K562 (cell line): ENCODE measurements at regions of chr5 and their contacts with region 1.

Region 1: DNA sequence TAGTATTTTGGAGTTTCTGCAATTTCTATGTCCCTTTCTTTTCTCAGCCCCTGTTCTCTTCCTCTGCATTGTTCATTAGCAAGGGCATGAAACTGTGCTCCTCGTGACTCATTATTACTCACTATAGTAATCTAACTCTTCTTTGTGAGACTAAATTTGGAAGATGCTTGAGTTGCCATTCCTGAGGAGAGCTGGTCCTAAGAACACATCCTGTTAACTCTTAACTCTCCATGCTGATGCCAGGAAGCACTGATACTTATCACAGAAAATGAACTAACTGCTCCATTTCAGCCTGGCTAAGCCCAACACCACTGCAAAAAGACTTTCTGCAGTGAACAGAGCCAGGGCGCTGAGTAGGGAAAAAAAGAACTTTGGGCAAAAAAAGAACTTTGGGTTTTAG is 10.6 kb upstream of the CSNK1A1 start:
- DNase-seq: peak in 2 of 4 experiments; percentile 36 to 63
- ATAC-seq: peak; percentile 57
- H3K4me3 ChIP-seq: no peak overlapping the region
- H3K27ac ChIP-seq: peak overlapping the region; percentile 53; the same call in 1 of the 3 replicates
- H3K4me1 ChIP-seq: peaks cover 8 to 29% of the 10 kb centered on the region in 2 experiments; a peak in 4 of 5 replicates
- H3K27me3 ChIP-seq: no peaks in the 10 kb centered on the region
- CTCF ChIP-seq: no peak
- EP300 ChIP-seq: peak; percentile 61
- POLR2A ChIP-seq: no peak
- RAD21 ChIP-seq: peak in 1 of 2 experiments; percentile 18; a peak in 1 of 4 replicates

Region 2: GRCh38 chr5:149317281-149318048 is 244.4 kb before region 1 on chr5:
- CTCF ChIA-PET with region 1: no interaction called
- POLR2A ChIA-PET with region 1: interaction called, 3 read pairs
- in situ Hi-C with region 1: no loop called
- intact Hi-C with region 1: loop called (anchors 1 kb)
- DNase-seq: peak; percentile 61 to 73 (median 68)
- ATAC-seq: peak; percentile 46
- H3K4me3 ChIP-seq: no peak overlapping the region
- H3K27ac ChIP-seq: no peak overlapping the region; the same call in 2 of the 3 replicates
- H3K4me1 ChIP-seq: peaks cover 27 to 28% of the 10 kb centered on the region in 2 experiments
- H3K27me3 ChIP-seq: peaks cover 5% of the 10 kb centered on the region in 2 experiments
- CTCF ChIP-seq: peak; percentile 64 to 92 (median 79); a peak in 5 of 6 replicates
- EP300 ChIP-seq: no peak
- POLR2A ChIP-seq: no peak
- RAD21 ChIP-seq: peak; percentile 83 to 93

Region 3: GRCh38 chr5:149381987-149382340 is 179.9 kb before region 1 on chr5:
- CTCF ChIA-PET with region 1: interaction called, 6 read pairs
- POLR2A ChIA-PET with region 1: interaction called, 3 read pairs
- in situ Hi-C with region 1: no loop called
- intact Hi-C with region 1: loop called (anchors 1 kb)
- DNase-seq: peak; percentile 81 to 85 (median 84)
- ATAC-seq: peak; percentile 97
- H3K4me3 ChIP-seq: no peak overlapping the region
- H3K27ac ChIP-seq: no peak overlapping the region
- H3K4me1 ChIP-seq: peaks cover 3 to 25% of the 10 kb centered on the region in 2 experiments; a peak in 3 of 5 replicates
- H3K27me3 ChIP-seq: no peaks in the 10 kb centered on the region
- CTCF ChIP-seq: peak; percentile 91 to 95 (median 92)
- EP300 ChIP-seq: no peak
- POLR2A ChIP-seq: no peak
- RAD21 ChIP-seq: peak; percentile 88 to 95

Region 4: DNA sequence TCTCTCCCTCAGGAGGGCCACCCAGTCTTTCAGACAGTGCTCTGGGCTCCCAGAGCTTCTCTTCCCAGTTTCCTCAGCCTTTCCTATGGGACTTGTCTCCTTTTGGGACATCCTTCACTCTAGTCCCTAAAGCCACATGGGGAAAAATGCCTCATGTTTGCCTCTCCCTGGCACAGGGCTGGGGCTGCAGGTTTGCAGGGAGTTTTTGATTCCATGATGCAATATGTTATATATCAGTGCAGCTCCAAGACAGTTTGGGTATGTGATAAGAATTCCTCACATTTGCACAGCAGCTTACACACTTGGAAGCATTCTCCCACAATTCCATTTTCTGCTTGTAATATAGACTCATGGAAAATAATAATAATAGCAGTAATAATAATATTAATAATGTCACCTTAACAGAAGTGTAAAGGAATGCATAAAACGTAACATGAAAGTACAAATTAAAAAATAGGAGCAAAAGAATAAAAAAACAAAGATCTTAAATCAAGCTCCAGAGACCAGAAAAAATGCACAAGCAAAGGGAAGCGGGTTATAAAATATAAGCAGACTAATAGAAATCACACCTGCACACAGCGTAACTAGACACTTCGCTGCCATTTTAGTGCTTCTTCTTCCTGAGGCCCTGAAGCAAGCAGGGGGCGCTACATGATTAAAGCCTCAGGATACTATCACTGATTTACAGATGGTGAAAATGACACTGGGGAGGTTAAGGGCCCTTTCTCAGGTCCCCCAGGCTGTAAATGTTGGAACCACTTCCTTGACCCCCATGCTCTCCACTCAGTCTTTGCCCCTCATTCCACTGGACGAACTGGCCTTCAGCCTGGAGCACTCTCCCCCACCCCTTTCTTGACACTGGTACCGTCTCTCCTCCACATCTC is 112.8 kb before region 1 on chr5:
- CTCF ChIA-PET with region 1: interaction called, 14 read pairs
- POLR2A ChIA-PET with region 1: interaction called, 3 read pairs
- in situ Hi-C with region 1: no loop called
- intact Hi-C with region 1: loop called (anchors 2 kb)
- DNase-seq: peak; percentile 48 to 82 (median 62)
- ATAC-seq: peak; percentile 66
- H3K4me3 ChIP-seq: no peak overlapping the region
- H3K27ac ChIP-seq: no peak overlapping the region
- H3K4me1 ChIP-seq: peaks cover 48 to 62% of the 10 kb centered on the region in 2 experiments
- H3K27me3 ChIP-seq: no peaks in the 10 kb centered on the region
- CTCF ChIP-seq: peak; percentile 70 to 86 (median 78)
- EP300 ChIP-seq: no peak; the same call in 1 of the 2 replicates
- POLR2A ChIP-seq: no peak
- RAD21 ChIP-seq: peak; percentile 81 to 90

Region 5: DNA sequence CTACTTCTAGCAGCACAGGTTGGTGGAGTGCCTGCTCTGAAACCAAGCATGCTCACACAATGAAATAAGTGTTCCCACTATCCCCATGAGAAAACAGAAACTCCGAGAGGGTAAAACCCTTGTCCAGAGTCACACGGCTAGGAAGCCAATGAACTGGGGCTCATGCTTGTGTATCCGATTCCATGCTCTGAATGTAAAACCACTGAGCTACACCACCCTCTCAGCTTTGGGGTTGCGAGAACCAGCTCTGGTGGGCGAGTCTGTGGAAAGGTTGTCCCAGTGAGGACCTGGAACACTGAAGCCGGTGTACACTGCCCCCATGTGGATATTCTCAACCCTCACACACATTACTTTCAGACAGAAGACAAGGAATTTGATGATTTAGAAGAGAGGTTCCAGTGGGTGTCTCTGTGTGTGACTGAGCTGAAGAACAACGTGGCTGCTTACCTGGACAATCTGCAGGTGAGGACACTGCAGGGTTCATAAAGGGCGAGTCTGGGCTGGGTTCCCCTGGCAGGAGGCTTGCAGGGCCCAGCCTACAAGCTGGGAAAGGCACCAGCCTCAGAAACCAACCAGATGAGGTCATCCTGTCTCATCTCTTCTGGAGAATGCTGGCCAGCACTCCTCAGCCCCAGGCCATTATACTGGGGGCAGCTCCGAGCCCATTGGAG is 56.9 kb after region 1 on chr5:
- CTCF ChIA-PET with region 1: no interaction called
- POLR2A ChIA-PET with region 1: no interaction called
- in situ Hi-C with region 1: no loop called
- intact Hi-C with region 1: loop called (anchors 1 kb)
- DNase-seq: peak; percentile 71 to 80 (median 78)
- ATAC-seq: peak; percentile 96
- H3K4me3 ChIP-seq: no peak overlapping the region
- H3K27ac ChIP-seq: no peak overlapping the region
- H3K4me1 ChIP-seq: peaks cover 0 to 9% of the 10 kb centered on the region in 2 experiments; a peak in 4 of 5 replicates
- H3K27me3 ChIP-seq: no peaks in the 10 kb centered on the region
- CTCF ChIP-seq: peak; percentile 78 to 88 (median 88)
- EP300 ChIP-seq: no peak
- POLR2A ChIP-seq: no peak
- RAD21 ChIP-seq: peak; percentile 86 to 88